HCT116 (cell line): ENCODE measurements at regions of chr2 and their contacts with region 1.

Region 1: DNA sequence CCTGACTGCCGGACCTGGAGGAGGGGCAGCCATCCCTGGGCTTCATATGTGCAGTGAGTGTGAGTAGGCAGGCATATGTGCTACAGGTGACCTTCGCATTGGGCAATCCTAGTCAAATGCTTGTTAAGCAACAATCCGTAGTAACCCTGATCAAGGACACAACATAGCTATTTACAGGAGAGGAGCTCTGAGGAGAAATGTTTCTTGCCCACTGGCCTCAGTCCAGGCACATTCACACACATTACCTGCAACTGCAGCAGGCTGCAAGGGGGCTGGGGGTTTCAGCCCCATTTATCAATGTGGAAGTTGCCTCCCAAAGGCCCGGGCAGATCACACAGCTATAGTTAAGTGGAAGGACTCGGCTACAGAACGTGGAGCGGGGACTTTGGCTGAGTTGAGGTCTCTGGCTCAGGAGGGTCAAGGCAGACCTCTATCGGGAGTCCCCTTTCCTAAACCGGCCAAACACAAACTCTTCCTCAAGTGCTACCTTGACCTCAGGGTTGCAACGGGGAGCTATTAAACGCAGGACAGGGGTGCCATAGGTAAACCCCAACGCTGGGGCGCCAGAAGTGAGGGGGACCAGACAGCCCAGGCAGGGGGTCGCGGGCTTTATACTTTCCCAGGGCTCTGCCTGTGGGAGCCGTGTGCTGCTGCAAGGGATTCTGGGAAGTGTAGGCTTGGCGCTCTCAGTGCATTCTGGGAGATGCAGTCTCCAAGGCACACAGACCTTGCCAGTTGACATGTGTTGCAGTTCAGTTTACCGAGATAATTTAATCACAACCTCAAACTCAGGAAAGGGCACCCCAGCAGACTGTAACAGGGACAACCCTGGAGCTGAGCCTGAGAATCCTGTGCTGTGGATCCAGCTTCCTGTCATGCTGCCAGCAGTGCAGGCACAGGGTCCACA is 9.4 kb downstream of the KHK start:
- DNase-seq: no peak
- ATAC-seq: peak; percentile 88
- H3K4me3 ChIP-seq: no peak overlapping the region
- H3K27ac ChIP-seq: no peak overlapping the region
- H3K4me1 ChIP-seq: peaks cover 0 to 9% of the 10 kb centered on the region in 2 experiments; a peak in 1 of 4 replicates
- H3K27me3 ChIP-seq: no peaks in the 10 kb centered on the region
- CTCF ChIP-seq: no peak
- POLR2A ChIP-seq: peak; percentile 25
- RAD21 ChIP-seq: no peak

Region 2: GRCh38 chr2:26922405-26923188 is 173.4 kb before region 1 on chr2:
- CTCF ChIA-PET with region 1: no interaction called
- POLR2A ChIA-PET with region 1: no interaction called
- RAD21 ChIA-PET with region 1: no interaction called
- intact Hi-C with region 1: no loop called
- DNase-seq: peak; percentile 47
- ATAC-seq: peak; percentile 99
- H3K4me3 ChIP-seq: no peak overlapping the region
- H3K27ac ChIP-seq: no peak overlapping the region
- H3K4me1 ChIP-seq: peaks cover 4 to 9% of the 10 kb centered on the region in 2 experiments; a peak in 1 of 4 replicates
- H3K27me3 ChIP-seq: no peaks in the 10 kb centered on the region
- CTCF ChIP-seq: peak; percentile 69 to 83 (median 74)
- POLR2A ChIP-seq: no peak
- RAD21 ChIP-seq: peak; percentile 68

Region 3: GRCh38 chr2:27191053-27191829 is 95.2 kb after region 1 on chr2:
- CTCF ChIA-PET with region 1: interaction called, 5 read pairs
- POLR2A ChIA-PET with region 1: no interaction called
- RAD21 ChIA-PET with region 1: no interaction called
- intact Hi-C with region 1: loop called (anchors 1 kb)
- DNase-seq: peak; percentile 43
- ATAC-seq: peak; percentile 97
- H3K4me3 ChIP-seq: no peak overlapping the region
- H3K27ac ChIP-seq: no peak overlapping the region
- H3K4me1 ChIP-seq: no peaks in the 10 kb centered on the region
- H3K27me3 ChIP-seq: no peaks in the 10 kb centered on the region
- CTCF ChIP-seq: peak; percentile 71 to 87 (median 74)
- POLR2A ChIP-seq: no peak
- RAD21 ChIP-seq: peak; percentile 85

Region 4: GRCh38 chr2:27217217-27218121 is 121.5 kb after region 1 on chr2 and contains the start of gene CAD:
- CTCF ChIA-PET with region 1: no interaction called
- POLR2A ChIA-PET with region 1: no interaction called
- RAD21 ChIA-PET with region 1: no interaction called
- intact Hi-C with region 1: loop called (anchors 5 kb)
- DNase-seq: peak; percentile 56
- ATAC-seq: peak; percentile 82
- H3K4me3 ChIP-seq: peak within 1 kb of the TSS; percentile 78 to 91
- H3K27ac ChIP-seq: peak within 1 kb of the TSS; percentile 82
- H3K4me1 ChIP-seq: peaks cover 3 to 27% of the 10 kb centered on the region in 2 experiments; a peak in 3 of 4 replicates
- H3K27me3 ChIP-seq: no peaks in the 10 kb centered on the region
- CTCF ChIP-seq: peak in 1 of 3 experiments; percentile 4; a peak in 1 of 6 replicates
- POLR2A ChIP-seq: peak; percentile 37
- RAD21 ChIP-seq: no peak
- total RNA-seq, gene CAD: 114 TPM